ENCODE measurements at regions of chr3 and their contacts with region 1.

Region 1: DNA sequence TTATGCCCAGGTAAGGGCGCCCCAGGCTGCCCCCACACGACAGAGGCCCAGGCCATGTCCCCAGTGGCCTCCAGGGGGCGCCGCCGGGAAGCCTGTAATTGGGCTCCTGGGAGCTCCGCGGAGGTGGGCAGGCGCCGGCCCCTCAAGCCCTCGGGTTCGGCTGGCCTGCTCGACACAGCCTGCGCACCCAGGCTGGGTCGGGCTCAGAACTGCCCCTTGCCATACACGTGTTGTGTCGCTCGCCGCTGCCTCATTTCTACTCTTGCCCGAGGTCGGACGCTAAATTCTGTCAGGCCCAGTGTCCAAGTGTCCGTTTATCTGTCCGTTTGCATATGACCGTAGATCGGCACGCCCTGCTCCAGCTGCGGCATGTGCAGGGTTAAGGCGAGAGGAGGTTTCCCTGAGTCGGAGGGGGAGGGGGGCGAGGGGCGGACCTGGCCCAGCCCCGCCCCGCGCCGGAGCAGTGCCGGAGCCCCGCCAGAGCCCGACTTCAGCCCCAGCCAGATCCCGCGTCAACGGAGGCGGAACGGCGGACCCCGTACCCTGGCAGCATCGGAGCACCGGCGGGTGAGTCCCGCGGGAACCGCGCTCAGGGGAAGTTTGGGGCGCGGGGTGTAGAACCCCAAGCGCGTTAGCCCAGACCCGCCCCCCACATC is at the start of gene KLHDC8B:
- DNase-seq: peak; percentile 97
- H3K4me3 ChIP-seq: peak within 1 kb of the TSS; percentile 81 to 90
- H3K27ac ChIP-seq: peak within 1 kb of the TSS; percentile 70 to 99
- H3K4me1 ChIP-seq: peaks cover 14 to 57% of the 10 kb centered on the region in 2 experiments
- H3K27me3 ChIP-seq: no peaks in the 10 kb centered on the region
- CTCF ChIP-seq: peak; percentile 92
- EP300 ChIP-seq: no peak; a peak in 1 of 4 replicates
- RAD21 ChIP-seq: peak; percentile 71
- polyA plus RNA-seq, gene KLHDC8B: 35.3 and 40.6 TPM in 2 replicates

Region 2: DNA sequence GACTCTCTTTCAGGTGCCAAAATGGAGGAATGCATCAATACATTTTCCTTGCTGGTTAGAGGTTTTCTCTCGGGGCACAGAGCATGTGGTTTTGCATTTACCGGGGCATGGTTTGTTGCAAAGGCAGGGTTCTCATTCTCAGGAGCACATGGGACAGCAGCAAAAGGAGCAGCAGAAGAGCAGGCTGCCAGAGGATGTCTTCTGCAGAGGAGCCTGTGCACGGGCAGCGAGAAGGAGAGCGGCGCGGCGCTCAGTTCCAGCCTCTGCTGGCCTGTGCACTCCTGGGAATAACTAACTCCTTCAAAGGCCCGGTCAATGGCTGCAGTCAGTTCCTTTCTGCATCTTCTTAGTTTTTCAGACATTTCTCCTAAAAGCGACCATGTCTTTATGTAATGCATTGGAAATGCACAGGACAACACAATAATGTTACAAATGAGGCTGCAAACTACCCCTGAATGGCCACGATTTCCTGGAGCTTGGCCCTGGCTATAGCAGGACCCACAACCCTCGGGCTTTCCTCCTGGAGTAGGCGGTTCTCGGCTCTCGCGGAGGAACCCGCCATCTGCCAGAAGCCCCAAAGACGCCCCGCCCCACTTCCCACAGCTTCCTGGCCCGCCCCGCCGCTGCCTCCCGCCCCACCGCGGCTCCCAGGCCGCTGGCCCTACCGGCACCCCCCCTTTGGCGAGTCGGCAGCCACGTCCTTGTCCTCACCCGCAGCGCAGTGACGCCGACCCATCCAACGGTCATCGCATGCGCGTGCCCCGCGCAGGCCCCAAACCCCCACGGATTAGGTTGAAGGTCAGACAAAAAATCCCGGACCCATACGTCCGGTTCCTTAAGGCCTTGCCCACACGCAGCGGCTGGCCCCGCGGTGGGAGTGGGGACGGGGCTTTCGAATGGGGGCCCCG is 105.5 kb after region 1 on chr3 and contains the start of gene C3orf62:
- CTCF ChIA-PET with region 1: interaction called, 26 read pairs
- POLR2A ChIA-PET with region 1: interaction called, 13 read pairs
- DNase-seq: peak; percentile 93
- H3K4me3 ChIP-seq: peak within 1 kb of the TSS; percentile 32; a peak in 3 of 4 replicates
- H3K27ac ChIP-seq: peak within 1 kb of the TSS; percentile 59 to 78; a peak in 3 of 4 replicates
- H3K4me1 ChIP-seq: peaks cover 0 to 3% of the 10 kb centered on the region in 2 experiments; a peak in 1 of 4 replicates
- H3K27me3 ChIP-seq: no peaks in the 10 kb centered on the region
- CTCF ChIP-seq: no peak
- EP300 ChIP-seq: no peak
- RAD21 ChIP-seq: no peak
- polyA plus RNA-seq, gene C3orf62: 4.2 and 5.8 TPM in 2 replicates

Region 3: DNA sequence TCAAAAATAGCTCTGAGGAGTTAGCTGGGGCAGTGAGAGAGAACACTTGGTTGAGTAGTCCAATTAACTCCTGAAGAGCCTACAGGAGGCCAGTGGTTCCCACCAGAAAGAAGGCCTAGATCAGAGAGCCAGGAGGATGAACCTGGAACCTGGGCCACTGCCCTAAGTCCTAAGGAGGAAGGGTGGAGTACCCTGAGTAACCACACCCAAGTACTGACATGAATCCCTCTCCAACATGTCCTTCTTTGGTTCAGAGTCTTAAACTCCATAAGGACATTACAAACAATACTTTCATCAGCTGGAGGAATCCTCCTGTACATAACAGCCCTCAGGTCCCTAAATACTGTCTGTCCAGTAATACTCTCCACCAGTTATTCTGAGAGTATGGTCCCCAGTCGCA is 131.4 kb after region 1 on chr3:
- CTCF ChIA-PET with region 1: interaction called, 16 read pairs
- POLR2A ChIA-PET with region 1: no interaction called
- DNase-seq: no peak
- H3K4me3 ChIP-seq: no peak overlapping the region
- H3K27ac ChIP-seq: no peak overlapping the region
- H3K4me1 ChIP-seq: no peaks in the 10 kb centered on the region
- H3K27me3 ChIP-seq: no peaks in the 10 kb centered on the region
- CTCF ChIP-seq: no peak
- EP300 ChIP-seq: no peak
- RAD21 ChIP-seq: no peak

Region 4: GRCh38 chr3:49445381-49445780 is 274.1 kb after region 1 on chr3:
- CTCF ChIA-PET with region 1: interaction called, 21 read pairs
- POLR2A ChIA-PET with region 1: interaction called, 4 read pairs
- DNase-seq: no peak
- H3K4me3 ChIP-seq: no peak overlapping the region
- H3K27ac ChIP-seq: no peak overlapping the region
- H3K4me1 ChIP-seq: no peaks in the 10 kb centered on the region
- H3K27me3 ChIP-seq: no peaks in the 10 kb centered on the region
- CTCF ChIP-seq: no peak
- EP300 ChIP-seq: no peak
- RAD21 ChIP-seq: no peak

Measured in SK-N-SH (cell line).